ENCODE measurements at regions of chr4 and their contacts with region 1.

Region 1: DNA sequence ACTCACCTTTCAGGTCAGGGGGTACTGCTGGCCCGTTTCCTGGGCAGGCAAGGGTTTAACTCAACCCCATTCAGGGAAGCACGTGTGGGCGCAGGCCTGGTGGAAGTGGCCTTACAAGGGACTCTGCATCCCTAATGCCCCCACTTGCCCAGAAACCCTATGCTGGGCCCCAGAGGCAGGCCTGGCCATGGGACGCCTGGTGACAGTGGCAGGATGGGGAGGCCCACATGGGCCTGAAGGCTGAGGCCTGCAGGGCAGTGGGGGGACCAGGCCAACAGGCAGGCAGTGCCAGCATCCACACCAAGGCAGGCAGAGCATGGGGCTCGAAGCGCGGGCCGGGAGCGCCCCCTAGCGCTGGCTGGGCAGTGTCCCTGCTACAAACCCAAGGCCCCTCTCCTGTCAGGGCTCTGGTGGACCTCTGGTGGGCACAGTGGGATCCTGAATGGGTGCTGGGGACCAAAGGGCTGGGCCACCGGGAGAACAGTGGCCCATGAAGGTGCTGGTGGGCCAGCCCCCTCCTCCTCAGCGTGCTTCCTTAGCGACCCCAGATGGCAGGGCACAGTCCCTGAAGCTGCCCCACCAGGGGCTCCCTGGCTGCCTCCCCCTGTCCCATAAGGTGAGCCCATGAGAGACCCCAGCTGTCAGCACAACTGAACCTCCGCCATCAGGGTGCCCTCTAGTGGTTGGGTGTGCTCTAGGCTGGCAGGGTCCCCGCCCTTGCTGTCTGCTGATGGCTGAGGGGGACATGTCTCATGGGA is 16.8 kb downstream of the FGFR3 start:
- DNase-seq: peak; percentile 80
- H3K4me3 ChIP-seq: no peak overlapping the region
- H3K27ac ChIP-seq: no peak overlapping the region
- H3K4me1 ChIP-seq: peaks cover 0 to 22% (median 10%) of the 10 kb centered on the region in 4 donors
- H3K27me3 ChIP-seq: no peaks in the 10 kb centered on the region
- CTCF ChIP-seq: peak; percentile 47 to 85 (median 76)
- EP300 ChIP-seq: no peak
- POLR2A ChIP-seq: no peak

Region 2: GRCh38 chr4:1746265-1746691 is 63.7 kb before region 1 on chr4:
- intact Hi-C with region 1: loop called (anchors 1 kb)
- DNase-seq: peak; percentile 78
- H3K4me3 ChIP-seq: no peak overlapping the region
- H3K27ac ChIP-seq: no peak overlapping the region
- H3K4me1 ChIP-seq: peaks cover 0 to 7% (median 2%) of the 10 kb centered on the region in 4 donors
- H3K27me3 ChIP-seq: peaks cover 0 to 12% (median 5%) of the 10 kb centered on the region in 3 donors
- CTCF ChIP-seq: peak; percentile 48 to 79 (median 61)
- EP300 ChIP-seq: no peak
- POLR2A ChIP-seq: no peak

Region 3: DNA sequence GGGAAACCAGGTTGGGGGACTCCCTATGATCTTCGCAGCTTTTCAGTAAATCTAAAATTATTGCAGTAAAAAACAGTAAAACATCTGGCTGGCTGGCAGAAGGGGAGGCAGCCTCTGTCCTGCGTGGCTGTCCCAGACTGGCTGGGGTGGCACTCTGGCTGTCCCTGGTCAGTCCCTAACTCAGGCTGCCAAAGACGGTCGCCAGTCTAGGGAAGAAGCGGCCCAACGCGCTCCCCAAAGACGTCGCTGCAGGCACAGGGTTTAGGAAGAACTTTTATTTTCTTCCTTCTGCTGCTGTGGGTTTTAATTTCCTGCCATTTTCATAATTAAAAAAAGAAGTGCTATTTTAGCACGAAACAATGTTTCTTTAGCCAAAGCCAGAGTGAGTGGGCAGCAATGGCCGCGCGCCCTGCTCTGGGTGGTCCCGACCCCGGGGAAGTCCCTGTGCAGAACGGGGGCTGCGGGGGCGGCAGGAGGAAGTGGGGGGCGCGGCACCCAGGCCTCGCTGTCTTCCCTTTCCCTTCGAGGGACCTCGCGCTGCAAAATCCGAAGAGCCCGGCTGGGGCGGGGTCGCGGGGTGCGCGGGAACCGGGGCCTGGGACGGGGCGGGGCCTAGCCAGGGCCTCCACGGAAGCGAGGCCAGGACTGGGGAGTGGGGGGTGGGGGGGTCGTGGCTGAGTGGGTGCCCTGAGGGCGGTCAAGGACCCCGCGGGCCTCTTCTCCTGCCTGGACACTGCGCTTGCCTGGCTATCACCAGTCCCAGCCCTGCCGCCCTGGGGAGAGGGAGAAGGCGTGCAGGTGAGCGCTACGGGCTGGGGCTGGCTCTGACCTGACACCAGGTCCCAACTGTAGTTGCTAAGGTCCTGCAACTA is 52.4 kb after region 1 on chr4:
- intact Hi-C with region 1: no loop called
- DNase-seq: no peak
- H3K4me3 ChIP-seq: peak overlapping the region in 1 of 4 donors; percentile 20
- H3K27ac ChIP-seq: no peak overlapping the region
- H3K4me1 ChIP-seq: peaks cover 0 to 6% (median 6%) of the 10 kb centered on the region in 4 donors
- H3K27me3 ChIP-seq: peaks cover 3 to 55% (median 49%) of the 10 kb centered on the region in 3 donors
- CTCF ChIP-seq: no peak
- EP300 ChIP-seq: no peak
- POLR2A ChIP-seq: no peak

Measured in sigmoid colon (tissue), 7 donors.